Vagina (tissue), 2 donors: ENCODE measurements at regions of chr22 and their contacts with region 1.

Region 1: GRCh38 chr22:44080936-44081861 is 57.1 kb downstream of the PARVB start:
- DNase-seq: no peak
- H3K4me3 ChIP-seq: no peak overlapping the region
- H3K27ac ChIP-seq: no peak overlapping the region
- H3K4me1 ChIP-seq: peaks cover 19% of the 10 kb centered on the region
- H3K27me3 ChIP-seq: no peaks in the 10 kb centered on the region
- CTCF ChIP-seq: peak; percentile 67 to 76 (median 69)
- POLR2A ChIP-seq: no peak

Region 2: DNA sequence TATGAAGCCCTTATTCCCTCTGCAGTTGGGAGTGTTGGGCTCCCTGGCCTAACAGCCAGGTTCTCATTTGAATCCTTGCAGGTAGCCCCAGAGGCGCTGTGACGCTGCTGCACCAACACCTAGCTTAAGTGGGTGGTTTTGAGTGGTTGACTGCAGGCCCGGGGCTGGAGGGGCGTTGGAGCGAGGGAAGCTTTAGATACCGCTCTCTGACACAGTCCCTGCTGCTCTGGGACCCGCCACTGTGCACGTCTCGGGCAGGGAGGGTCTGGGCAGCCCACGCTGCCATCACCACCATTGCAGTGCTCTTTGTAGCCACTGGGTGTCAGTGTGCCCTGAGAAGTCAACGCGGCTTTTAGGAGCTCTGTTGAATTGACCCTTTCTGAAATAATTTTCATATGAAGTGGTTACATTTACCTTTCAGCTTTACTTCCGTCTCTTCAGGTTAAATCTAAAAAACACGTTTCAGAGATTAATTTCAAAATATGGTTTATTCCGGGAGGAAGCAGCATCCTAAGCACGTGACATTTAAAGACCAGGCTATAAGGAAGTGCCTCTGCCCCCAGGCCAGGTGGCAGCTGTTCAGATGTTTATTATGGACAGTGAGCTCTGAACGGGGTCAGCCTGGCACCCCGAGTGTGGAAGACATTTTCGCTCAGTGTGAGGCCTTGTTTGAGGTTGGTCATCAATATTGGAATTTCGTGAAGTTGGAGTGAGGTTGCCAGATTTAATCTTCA is 88.0 kb before region 1 on chr22:
- intact Hi-C with region 1: loop called (anchors 5 kb)
- DNase-seq: no peak
- H3K4me3 ChIP-seq: no peak overlapping the region
- H3K27ac ChIP-seq: no peak overlapping the region
- H3K4me1 ChIP-seq: no peaks in the 10 kb centered on the region
- H3K27me3 ChIP-seq: no peaks in the 10 kb centered on the region
- CTCF ChIP-seq: peak; percentile 91 to 93 (median 92)
- POLR2A ChIP-seq: no peak